CD8-positive, alpha-beta memory T cell (primary cell): ENCODE measurements at regions of chr6 and their contacts with region 1.

Region 1: GRCh38 chr6:106339334-106340029 is 13.9 kb upstream of the ATG5 start:
- DNase-seq: peak; percentile 14 to 61 (median 32)
- H3K4me3 ChIP-seq: no peak overlapping the region
- H3K4me3 Mint-ChIP-seq: peak overlapping the region in 5 of 7 donors; percentile 12 to 50 (median 37)
- H3K27ac ChIP-seq: no peak overlapping the region
- H3K27ac Mint-ChIP-seq: peak overlapping the region in 2 of 8 donors; percentile 15 to 16
- H3K4me1 ChIP-seq: no peaks in the 10 kb centered on the region
- H3K4me1 Mint-ChIP-seq: peaks cover 5 to 6% (median 5%) of the 10 kb centered on the region in 3 donors
- H3K27me3 ChIP-seq: no peaks in the 10 kb centered on the region
- H3K27me3 Mint-ChIP-seq: peaks cover 20 to 24% of the 10 kb centered on the region in 2 donors

Region 2: GRCh38 chr6:106225581-106225980 is 113.9 kb before region 1 on chr6:
- CTCF ChIA-PET with region 1: no interaction called
- POLR2A ChIA-PET with region 1: no interaction called
- DNase-seq: no peak
- H3K4me3 ChIP-seq: no peak overlapping the region
- H3K4me3 Mint-ChIP-seq: no peak overlapping the region
- H3K27ac ChIP-seq: no peak overlapping the region
- H3K27ac Mint-ChIP-seq: peak overlapping the region in 7 of 8 donors; percentile 8 to 67 (median 23)
- H3K4me1 ChIP-seq: no peaks in the 10 kb centered on the region
- H3K4me1 Mint-ChIP-seq: peaks cover 14 to 34% (median 23%) of the 10 kb centered on the region in 3 donors
- H3K27me3 ChIP-seq: no peaks in the 10 kb centered on the region
- H3K27me3 Mint-ChIP-seq: no peaks in the 10 kb centered on the region

Region 3: GRCh38 chr6:106325336-106326178 is 13.9 kb before region 1 on chr6 and contains the start of gene ATG5:
- CTCF ChIA-PET with region 1: interaction called, 19 read pairs
- POLR2A ChIA-PET with region 1: interaction called, 6 read pairs
- DNase-seq: peak; percentile 98 to 100 (median 99)
- H3K4me3 ChIP-seq: peak within 1 kb of the TSS; percentile 97
- H3K4me3 Mint-ChIP-seq: peak within 1 kb of the TSS; percentile 97 to 100 (median 99)
- H3K27ac ChIP-seq: peak within 1 kb of the TSS; percentile 94
- H3K27ac Mint-ChIP-seq: peak within 1 kb of the TSS; percentile 95 to 99 (median 97)
- H3K4me1 ChIP-seq: peaks cover 23% of the 10 kb centered on the region
- H3K4me1 Mint-ChIP-seq: peaks cover 46 to 52% (median 48%) of the 10 kb centered on the region in 3 donors
- H3K27me3 ChIP-seq: no peaks in the 10 kb centered on the region
- H3K27me3 Mint-ChIP-seq: peaks cover 10 to 11% of the 10 kb centered on the region in 2 donors
- total RNA-seq, gene ATG5: 44.5 to 45.0 TPM

Region 4: DNA sequence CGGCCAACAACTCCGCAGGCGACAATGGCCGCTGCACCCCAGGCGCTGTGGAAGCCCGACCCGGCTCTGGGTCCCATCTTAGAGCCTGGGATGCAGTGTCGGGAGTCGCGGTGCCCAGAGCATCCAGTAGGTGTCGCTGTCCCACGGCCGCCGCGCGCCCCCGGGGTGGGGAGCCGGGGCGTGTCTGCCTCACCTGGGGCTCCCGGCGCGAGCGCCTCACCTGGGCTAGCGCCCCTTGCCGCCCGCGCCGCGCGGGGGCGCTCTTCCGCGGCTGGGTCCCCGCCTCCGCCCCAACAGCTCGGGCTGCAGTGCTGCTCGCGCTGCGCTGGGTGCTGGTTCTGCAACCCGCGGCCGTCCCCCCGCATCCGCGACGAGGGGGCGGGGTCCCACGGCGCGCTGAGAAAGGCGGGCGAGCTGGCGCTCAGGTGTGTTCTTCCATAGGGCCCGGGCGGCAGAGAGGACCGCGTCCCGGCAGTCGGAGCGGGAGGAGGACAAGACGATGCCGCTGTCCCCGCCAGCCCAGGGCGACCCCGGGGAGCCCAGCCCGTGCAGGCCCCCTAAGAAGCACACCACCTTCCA is 21.0 kb after region 1 on chr6 and contains the start of gene CRYBG1:
- CTCF ChIA-PET with region 1: interaction called, 15 read pairs
- POLR2A ChIA-PET with region 1: no interaction called
- DNase-seq: peak; percentile 56 to 75 (median 71)
- H3K4me3 ChIP-seq: peak within 1 kb of the TSS; percentile 58
- H3K4me3 Mint-ChIP-seq: peak within 1 kb of the TSS; percentile 67 to 91 (median 84)
- H3K27ac ChIP-seq: no peak within 1 kb of the TSS
- H3K27ac Mint-ChIP-seq: peak within 1 kb of the TSS in 1 of 8 donors; percentile 75
- H3K4me1 ChIP-seq: peaks cover 12% of the 10 kb centered on the region
- H3K4me1 Mint-ChIP-seq: peaks cover 9 to 12% (median 12%) of the 10 kb centered on the region in 3 donors
- H3K27me3 ChIP-seq: peaks cover 18% of the 10 kb centered on the region
- H3K27me3 Mint-ChIP-seq: peaks cover 20 to 39% of the 10 kb centered on the region in 2 donors
- total RNA-seq, gene CRYBG1: 32.3 TPM

Region 5: DNA sequence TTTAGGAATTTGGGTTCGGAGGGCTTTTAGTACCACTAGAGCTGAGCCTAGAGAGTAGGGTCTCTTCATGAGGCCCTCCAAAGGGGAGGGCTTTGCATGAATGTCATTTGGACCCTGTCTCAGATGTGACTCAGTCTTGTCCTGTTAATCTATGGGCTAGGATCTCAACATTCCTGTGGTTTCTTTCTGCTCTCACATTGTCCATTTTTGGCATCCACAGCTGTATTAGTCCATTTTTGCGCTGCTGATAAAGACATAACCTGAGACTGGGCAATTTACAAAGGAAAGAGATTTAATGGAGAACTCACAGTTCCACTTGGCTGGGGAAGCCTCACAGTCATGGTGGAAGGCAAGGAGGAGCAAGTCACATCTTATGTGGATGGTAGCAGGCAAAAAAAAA is 82.0 kb after region 1 on chr6:
- CTCF ChIA-PET with region 1: no interaction called
- POLR2A ChIA-PET with region 1: no interaction called
- DNase-seq: no peak
- H3K4me3 ChIP-seq: no peak overlapping the region
- H3K4me3 Mint-ChIP-seq: no peak overlapping the region
- H3K27ac ChIP-seq: no peak overlapping the region
- H3K27ac Mint-ChIP-seq: no peak overlapping the region
- H3K4me1 ChIP-seq: no peaks in the 10 kb centered on the region
- H3K4me1 Mint-ChIP-seq: no peaks in the 10 kb centered on the region
- H3K27me3 ChIP-seq: no peaks in the 10 kb centered on the region
- H3K27me3 Mint-ChIP-seq: peaks cover 2 to 21% of the 10 kb centered on the region in 2 donors

Region 6: DNA sequence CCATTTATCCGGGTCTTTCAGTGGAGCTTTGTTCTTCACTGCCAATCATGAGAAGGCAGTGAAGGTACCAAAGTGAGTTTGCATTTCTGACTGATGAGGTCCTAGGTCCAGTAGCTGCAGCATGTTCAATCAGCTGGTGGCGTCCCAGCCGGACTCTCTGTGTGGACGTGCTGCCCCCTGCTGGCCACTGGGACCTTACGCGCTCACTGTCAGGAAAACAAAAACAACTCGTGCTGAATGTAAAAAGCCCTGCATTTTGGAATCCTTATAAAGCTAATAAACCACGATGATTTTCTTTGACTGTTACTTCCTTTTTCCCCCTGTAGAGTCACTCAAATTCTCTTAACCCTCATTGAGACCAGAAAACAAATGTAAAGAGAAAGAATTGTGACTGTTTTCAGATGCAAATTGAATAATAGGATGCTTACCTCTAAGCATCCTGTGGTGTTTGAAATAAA is 640.0 kb after region 1 on chr6:
- CTCF ChIA-PET with region 1: interaction called, 20 read pairs
- POLR2A ChIA-PET with region 1: no interaction called
- DNase-seq: peak; percentile 47 to 78 (median 67)
- H3K4me3 ChIP-seq: no peak overlapping the region
- H3K4me3 Mint-ChIP-seq: no peak overlapping the region
- H3K27ac ChIP-seq: no peak overlapping the region
- H3K27ac Mint-ChIP-seq: no peak overlapping the region
- H3K4me1 ChIP-seq: no peaks in the 10 kb centered on the region
- H3K4me1 Mint-ChIP-seq: peaks cover 5 to 9% (median 7%) of the 10 kb centered on the region in 3 donors
- H3K27me3 ChIP-seq: peaks cover 10% of the 10 kb centered on the region
- H3K27me3 Mint-ChIP-seq: peaks cover 51 to 54% of the 10 kb centered on the region in 2 donors